Posterior vena cava (tissue), 2 donors: ENCODE measurements at regions of chr3 and their contacts with region 1.

Region 1: DNA sequence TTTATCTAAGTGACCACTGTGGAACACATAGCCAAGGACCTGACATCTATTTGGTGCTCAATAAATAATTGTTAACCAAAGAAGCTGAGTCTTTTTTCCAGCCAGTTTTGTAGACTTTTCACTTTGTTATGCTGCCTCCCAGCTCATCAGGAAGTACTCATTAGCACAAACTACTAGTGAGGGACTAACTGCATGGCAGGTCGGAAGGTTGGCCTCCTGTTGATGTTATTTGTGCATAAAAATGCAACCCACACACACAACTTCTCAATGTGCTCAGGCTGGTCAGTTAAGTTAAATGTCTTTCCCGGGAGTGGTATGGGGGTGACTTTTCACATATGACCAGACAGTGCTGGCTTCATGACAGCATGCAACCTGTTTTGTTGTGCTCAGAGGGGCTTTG is 263.0 kb upstream of the TOPAZ1 start:
- DNase-seq: no peak

Region 2: GRCh38 chr3:43489930-43490329 is 488.8 kb before region 1 on chr3:
- intact Hi-C with region 1: no loop called
- DNase-seq: no peak

Region 3: DNA sequence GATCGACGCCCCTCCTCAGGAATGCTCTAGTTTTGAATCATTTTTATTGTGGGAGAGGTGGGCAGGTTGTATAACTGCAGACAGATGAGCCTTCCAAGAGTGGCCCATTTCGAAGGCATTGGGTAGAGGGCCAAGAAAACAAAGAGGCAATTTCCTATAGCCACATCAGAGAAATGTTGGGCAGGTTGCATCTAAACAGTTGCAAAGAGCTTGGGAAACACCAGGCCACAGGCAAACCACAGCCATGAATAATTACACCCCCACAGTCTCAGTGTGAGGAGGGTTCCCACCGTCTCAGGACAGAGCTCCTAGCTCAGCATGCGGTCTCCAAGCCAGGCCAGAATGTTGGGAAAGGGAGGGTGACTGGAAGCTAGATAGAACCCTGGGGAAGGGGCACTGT is 30.7 kb before region 1 on chr3:
- intact Hi-C with region 1: no loop called
- DNase-seq: no peak

Region 4: GRCh38 chr3:44021651-44022594 is 43.2 kb after region 1 on chr3:
- intact Hi-C with region 1: loop called in 1 of 2 experiments (anchors 1 kb)
- DNase-seq: no peak

Region 5: DNA sequence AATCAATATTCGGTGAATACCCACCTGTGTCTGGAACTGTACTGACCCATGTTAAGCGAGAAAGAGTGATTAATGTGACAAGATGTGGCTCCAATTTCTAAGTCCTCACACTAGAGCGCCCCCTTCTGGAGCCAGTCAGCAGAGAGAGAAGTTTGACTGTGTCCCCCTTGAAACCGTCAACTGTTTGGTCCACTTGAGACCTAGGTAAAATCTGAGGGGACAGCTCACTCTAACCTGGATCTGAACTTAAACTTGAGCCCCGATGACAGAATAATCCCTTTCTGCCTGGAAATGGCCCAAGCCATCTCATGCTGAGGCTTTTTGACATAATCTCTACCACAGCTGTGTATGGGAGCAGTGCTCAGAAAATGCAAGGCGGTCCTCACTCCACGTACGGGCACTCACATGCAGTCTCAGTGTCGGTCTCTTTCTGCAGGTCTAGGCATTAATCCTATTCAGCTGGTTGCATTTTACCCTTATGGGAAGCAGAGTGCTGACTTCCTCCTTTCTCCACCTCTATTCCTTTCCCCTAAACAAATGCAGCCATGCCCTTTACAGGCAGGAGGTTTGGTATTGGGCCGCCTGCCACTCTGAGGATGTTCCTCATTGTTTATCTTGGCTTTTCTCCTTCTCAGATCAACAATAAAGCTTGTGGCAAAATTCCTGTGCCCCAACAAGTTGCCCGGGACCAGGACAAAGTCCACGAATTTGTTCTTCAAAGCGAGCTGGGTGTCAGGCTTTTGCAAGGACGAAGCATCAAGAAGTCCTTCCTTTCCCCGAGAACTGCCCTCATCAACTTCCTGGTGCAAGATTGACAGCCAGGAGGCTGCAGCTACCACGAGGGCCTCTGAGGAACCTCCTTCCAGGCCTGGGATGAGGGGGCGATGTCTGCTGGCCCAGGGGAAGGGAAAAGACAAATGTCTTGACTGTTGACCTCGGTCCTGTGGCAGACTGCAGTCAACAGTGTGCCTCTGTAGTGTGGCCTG is 1568.3 kb after region 1 on chr3:
- intact Hi-C with region 1: no loop called
- DNase-seq: no peak